BJ (cell line): ENCODE measurements at regions of chr4 and their contacts with region 1.

Region 1: DNA sequence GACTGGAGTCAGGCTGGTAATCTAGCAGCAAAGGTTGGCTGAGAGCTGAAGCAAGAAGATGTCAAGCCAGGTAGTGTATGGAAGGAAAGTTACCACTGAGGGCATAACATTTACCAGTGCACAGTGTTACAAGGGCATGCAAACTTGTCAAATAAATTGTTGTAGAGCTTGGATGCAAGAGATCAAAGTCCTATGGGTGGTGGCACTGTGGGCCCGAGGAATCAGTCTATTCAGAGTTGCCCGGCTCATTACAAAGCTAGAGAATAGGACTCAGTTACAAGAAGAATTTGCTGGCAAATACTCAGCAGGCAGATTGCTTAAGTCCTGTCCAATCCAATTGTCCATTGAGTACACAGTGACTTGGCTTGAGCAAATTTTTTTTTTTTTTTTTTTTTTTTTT is 2043.8 kb downstream of the ARAP2 start:
- DNase-seq: no peak
- H3K4me3 ChIP-seq: no peak overlapping the region
- H3K27me3 ChIP-seq: no peaks in the 10 kb centered on the region
- CTCF ChIP-seq: no peak

Region 2: DNA sequence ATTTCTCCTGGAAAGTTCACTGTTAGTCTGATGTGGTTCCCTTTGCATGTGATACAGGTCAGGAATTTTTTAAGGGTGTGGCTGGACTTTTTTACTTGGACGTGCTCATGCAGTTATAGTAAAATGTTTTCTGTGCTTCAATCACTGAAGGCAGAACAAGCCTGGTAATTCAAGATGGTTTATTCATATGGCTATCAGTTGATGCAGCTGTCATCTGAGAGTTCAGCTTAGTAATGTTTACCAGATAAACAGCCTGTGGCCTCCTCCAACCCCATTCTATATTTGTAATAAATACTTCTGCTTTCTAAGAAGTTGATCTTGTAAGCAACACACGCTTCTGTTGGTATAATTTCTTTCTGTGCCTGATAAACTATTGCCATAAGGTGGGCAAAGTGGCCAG is 62.1 kb before region 1 on chr4:
- CTCF ChIA-PET with region 1: no interaction called
- POLR2A ChIA-PET with region 1: interaction called, 11 read pairs
- DNase-seq: no peak
- H3K4me3 ChIP-seq: no peak overlapping the region
- H3K27me3 ChIP-seq: no peaks in the 10 kb centered on the region
- CTCF ChIP-seq: no peak

Region 3: DNA sequence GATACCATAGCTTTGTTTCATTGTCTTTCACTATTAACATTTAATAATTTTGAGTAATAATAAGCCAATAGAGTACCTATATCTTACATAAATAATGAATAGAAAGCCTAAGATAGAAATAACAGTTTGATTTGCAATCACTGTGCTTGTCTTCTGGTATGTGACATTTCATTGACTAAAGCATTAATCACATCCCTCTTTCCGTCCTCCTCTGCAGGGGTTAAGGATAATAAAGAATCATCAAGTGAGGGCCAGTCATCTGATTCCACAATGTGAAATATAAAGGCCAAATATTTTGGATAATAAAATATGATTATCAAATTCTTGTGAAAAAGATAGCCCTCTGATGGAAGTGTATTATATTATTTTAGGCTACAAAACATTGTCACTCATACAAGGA is 29.6 kb before region 1 on chr4:
- CTCF ChIA-PET with region 1: no interaction called
- POLR2A ChIA-PET with region 1: no interaction called
- DNase-seq: no peak
- H3K4me3 ChIP-seq: no peak overlapping the region
- H3K27me3 ChIP-seq: no peaks in the 10 kb centered on the region
- CTCF ChIP-seq: no peak